K562 (cell line): ENCODE measurements at regions of chr18 and their contacts with region 1.

Region 1: DNA sequence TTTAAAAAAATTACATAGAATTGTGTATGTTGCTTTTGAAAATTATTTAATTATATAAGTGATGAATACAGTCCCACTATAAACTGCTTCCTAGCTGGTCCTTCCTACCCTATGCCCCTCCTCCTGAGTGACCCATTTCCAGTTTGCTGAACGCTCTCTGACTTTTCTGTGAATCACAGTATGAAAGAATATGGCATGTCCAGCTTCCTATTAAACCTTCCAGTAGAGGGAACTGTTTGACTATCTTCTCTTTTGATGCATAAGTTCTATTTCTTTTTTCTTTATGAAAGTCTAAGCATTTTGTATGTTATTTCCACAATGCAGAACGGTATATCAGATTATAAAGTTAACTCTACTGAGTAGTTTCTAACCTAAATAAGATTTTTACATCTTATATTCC is 41.3 kb downstream of the PSMG2 start:
- DNase-seq: peak in 3 of 4 experiments; percentile 26 to 54 (median 45)
- ATAC-seq: peak; percentile 82
- H3K4me3 ChIP-seq: no peak overlapping the region
- H3K27ac ChIP-seq: no peak overlapping the region
- H3K4me1 ChIP-seq: peaks cover 5 to 8% of the 10 kb centered on the region in 2 experiments
- H3K27me3 ChIP-seq: no peaks in the 10 kb centered on the region
- CTCF ChIP-seq: peak; percentile 44 to 82 (median 52); a peak in 4 of 6 replicates
- EP300 ChIP-seq: no peak
- POLR2A ChIP-seq: no peak
- RAD21 ChIP-seq: peak; percentile 74 to 89

Region 2: GRCh38 chr18:12694032-12694431 is 50.1 kb before region 1 on chr18:
- CTCF ChIA-PET with region 1: no interaction called
- POLR2A ChIA-PET with region 1: no interaction called
- in situ Hi-C with region 1: no loop called
- intact Hi-C with region 1: no loop called
- DNase-seq: no peak
- ATAC-seq: peak; percentile 19; the same call in 2 of the 3 replicates
- H3K4me3 ChIP-seq: no peak overlapping the region
- H3K27ac ChIP-seq: no peak overlapping the region
- H3K4me1 ChIP-seq: no peaks in the 10 kb centered on the region
- H3K27me3 ChIP-seq: no peaks in the 10 kb centered on the region
- CTCF ChIP-seq: no peak
- EP300 ChIP-seq: no peak
- POLR2A ChIP-seq: no peak
- RAD21 ChIP-seq: no peak

Region 3: DNA sequence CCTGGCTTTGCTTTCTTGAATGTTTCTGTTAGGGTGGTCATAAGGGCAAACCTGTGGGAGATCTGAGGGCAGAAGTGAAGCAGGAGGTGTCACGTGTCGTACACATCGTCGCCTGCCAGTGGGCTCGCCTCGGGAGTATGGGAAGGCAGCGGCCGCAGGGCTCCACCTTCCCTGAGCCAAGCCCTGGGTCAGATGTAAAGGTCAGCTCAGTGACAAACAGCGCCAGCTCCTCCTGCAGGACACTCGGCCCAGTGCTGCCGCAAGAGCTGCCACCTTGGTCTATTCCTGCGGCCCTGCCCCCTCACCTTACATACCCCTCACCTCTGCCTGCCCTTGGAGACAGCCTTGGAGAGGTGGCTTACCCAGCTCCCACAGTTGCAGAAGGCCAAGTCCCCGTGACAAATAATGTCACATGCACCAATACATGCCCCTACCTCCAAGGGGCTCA is 22.9 kb after region 1 on chr18:
- CTCF ChIA-PET with region 1: interaction called, 3 read pairs
- POLR2A ChIA-PET with region 1: interaction called, 6 read pairs
- in situ Hi-C with region 1: no loop called
- intact Hi-C with region 1: loop called (anchors 1 kb)
- DNase-seq: peak; percentile 66 to 72 (median 71)
- ATAC-seq: peak; percentile 95
- H3K4me3 ChIP-seq: no peak overlapping the region
- H3K27ac ChIP-seq: no peak overlapping the region
- H3K4me1 ChIP-seq: peaks cover 12 to 13% of the 10 kb centered on the region in 2 experiments
- H3K27me3 ChIP-seq: no peaks in the 10 kb centered on the region
- CTCF ChIP-seq: peak; percentile 74 to 76 (median 75)
- EP300 ChIP-seq: no peak
- POLR2A ChIP-seq: no peak
- RAD21 ChIP-seq: peak; percentile 54 to 70

Region 4: GRCh38 chr18:12890506-12890905 is 146.4 kb after region 1 on chr18:
- CTCF ChIA-PET with region 1: interaction called, 7 read pairs
- POLR2A ChIA-PET with region 1: interaction called, 3 read pairs
- in situ Hi-C with region 1: no loop called
- intact Hi-C with region 1: loop called (anchors 1 kb)
- DNase-seq: peak in 2 of 4 experiments; percentile 38 to 46
- ATAC-seq: peak; percentile 89
- H3K4me3 ChIP-seq: no peak overlapping the region
- H3K27ac ChIP-seq: no peak overlapping the region
- H3K4me1 ChIP-seq: peaks cover 0 to 3% of the 10 kb centered on the region in 2 experiments; a peak in 1 of 5 replicates
- H3K27me3 ChIP-seq: no peaks in the 10 kb centered on the region
- CTCF ChIP-seq: peak; percentile 35 to 40 (median 37); a peak in 3 of 6 replicates
- EP300 ChIP-seq: no peak
- POLR2A ChIP-seq: no peak
- RAD21 ChIP-seq: peak in 1 of 2 experiments; percentile 32; a peak in 1 of 4 replicates

Region 5: GRCh38 chr18:12934454-12935071 is 190.5 kb after region 1 on chr18:
- CTCF ChIA-PET with region 1: interaction called, 28 read pairs
- POLR2A ChIA-PET with region 1: interaction called, 3 read pairs
- in situ Hi-C with region 1: loop called (anchors 5 kb)
- intact Hi-C with region 1: loop called (anchors 1 kb)
- DNase-seq: peak; percentile 68 to 89 (median 74)
- ATAC-seq: peak; percentile 95
- H3K4me3 ChIP-seq: no peak overlapping the region
- H3K27ac ChIP-seq: no peak overlapping the region
- H3K4me1 ChIP-seq: no peaks in the 10 kb centered on the region; a peak in 1 of 5 replicates
- H3K27me3 ChIP-seq: no peaks in the 10 kb centered on the region
- CTCF ChIP-seq: peak; percentile 92 to 98 (median 98)
- EP300 ChIP-seq: no peak
- POLR2A ChIP-seq: no peak
- RAD21 ChIP-seq: peak; percentile 95 to 99